Upper lobe of right lung (tissue), 1 donor: ENCODE measurements at regions of chr17 and their contacts with region 1.

Region 1: DNA sequence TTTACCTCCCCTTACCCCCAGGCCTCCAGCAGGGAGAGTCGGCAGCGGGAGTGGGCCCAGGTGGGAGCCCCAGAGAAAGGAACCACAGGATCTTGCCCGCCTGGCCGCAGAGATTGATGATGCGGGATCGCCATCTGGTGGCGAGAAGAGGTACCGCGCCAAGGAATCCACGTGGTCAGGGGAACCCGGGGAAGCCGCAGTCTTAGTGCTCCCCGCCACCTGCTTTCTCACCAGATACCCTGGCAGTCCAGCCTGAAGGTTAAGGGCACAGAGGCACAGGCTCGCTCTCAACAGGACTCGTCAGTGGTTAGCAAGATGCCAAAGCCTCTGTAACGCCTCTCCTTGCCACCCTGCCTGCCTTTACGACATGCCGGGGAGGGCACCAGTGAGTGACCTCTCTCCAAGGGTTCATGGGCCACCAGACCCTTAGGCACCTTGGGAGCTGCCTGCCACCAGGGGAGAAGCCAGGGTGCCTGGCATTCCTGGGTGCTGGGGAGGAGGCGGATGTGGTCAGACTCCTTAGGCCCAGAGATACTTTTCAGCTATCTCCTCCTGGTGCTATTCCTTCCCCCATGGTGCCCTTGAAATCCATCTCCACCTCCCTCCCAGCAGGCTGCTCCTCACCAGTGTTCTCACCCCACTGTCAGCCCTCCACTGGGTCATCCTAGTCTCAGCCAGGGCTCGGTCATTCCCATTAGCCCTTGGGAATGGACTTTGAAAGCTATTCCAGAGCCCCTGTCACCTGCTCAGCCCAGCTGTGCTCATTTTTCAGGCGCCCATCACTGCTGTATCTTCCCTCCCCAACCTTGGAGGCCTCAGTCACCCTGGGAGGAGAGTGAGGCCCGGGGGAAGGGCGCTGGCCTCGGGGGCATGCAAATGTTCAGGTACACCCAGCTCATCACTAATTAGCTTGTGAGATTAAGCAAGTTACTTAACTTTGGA is 5.5 kb upstream of the RHBDF2 start:
- DNase-seq: peak; percentile 89
- ATAC-seq: peak; percentile 90
- H3K4me3 ChIP-seq: no peak overlapping the region
- H3K27ac ChIP-seq: no peak overlapping the region
- H3K4me1 ChIP-seq: peaks cover 16% of the 10 kb centered on the region
- H3K27me3 ChIP-seq: peaks cover 6% of the 10 kb centered on the region
- CTCF ChIP-seq: peak; percentile 94

Region 2: DNA sequence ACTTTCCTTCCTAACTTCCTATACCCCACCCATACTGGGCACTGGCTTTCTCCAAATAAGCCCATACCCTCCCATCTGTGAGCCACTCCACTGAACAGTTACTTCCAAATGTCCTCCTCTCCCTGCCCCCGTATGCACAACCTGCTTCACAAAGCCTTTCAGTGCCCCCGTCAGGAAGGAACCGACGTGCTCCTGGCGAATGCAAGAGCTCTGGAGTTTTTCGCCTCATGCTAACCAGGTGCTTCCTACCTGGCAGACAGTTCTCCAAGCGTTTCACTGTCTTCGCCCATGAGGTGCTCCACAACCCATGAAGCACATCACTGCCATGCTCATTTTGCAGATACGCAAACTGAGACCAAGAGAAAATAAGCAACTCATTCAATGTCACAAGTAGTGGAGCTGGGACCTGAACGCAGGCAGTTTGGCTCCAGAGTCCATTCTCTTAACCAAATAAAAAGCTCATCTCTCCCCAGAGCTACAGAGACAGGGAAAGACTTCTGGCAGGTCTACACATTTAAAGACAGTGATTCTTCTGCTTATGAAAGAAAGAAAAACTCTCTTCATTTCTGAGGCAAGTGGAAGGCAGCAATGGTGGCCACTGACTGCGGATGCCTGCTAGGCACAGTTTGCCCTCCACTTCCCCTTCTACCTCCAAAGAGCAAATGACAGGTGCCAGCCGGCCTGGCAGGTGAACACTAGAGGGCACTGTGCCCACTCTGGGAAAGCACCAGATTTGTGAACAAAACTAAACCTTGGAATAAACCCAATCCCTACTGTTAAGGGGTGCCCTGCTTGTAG is 98.4 kb before region 1 on chr17:
- intact Hi-C with region 1: loop called (anchors 5 kb)
- DNase-seq: peak; percentile 81
- ATAC-seq: peak; percentile 77
- H3K4me3 ChIP-seq: no peak overlapping the region
- H3K27ac ChIP-seq: no peak overlapping the region
- H3K4me1 ChIP-seq: peaks cover 6% of the 10 kb centered on the region
- H3K27me3 ChIP-seq: no peaks in the 10 kb centered on the region
- CTCF ChIP-seq: peak; percentile 85

Region 3: DNA sequence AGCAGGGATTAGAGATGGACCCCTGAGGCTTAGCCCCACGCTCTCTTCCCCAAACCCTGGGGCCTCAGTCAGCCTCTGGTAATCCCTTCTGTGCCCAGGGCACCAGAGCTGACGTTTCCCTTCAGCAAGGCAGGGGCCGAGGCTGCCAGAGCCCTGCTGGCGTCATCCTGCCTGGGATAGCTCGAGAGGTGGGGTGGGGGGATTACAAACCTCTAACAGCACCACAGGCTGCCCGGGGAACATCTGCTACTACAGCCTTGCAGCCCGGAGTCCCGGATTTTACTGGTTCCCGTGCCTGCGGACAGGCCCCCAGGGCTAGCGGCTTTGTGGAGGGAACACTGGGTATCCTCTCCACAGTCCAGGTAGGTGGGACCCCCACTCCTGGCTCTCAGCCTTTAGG is 39.3 kb before region 1 on chr17 and contains the start of gene AANAT:
- intact Hi-C with region 1: loop called (anchors 5 kb)
- DNase-seq: no peak
- ATAC-seq: no peak
- H3K4me3 ChIP-seq: no peak within 1 kb of the TSS
- H3K27ac ChIP-seq: no peak within 1 kb of the TSS
- H3K4me1 ChIP-seq: peaks cover 6% of the 10 kb centered on the region
- H3K27me3 ChIP-seq: no peaks in the 10 kb centered on the region
- CTCF ChIP-seq: no peak
- total RNA-seq, gene AANAT: not detected